CD8-positive, alpha-beta T cell (primary cell): ENCODE measurements at regions of chr5 and their contacts with region 1.

Region 1: GRCh38 chr5:162091336-162091735 is 23.8 kb downstream of the GABRG2 start:
- DNase-seq: no peak
- ATAC-seq: no peak
- H3K4me3 ChIP-seq: no peak overlapping the region
- H3K4me3 Mint-ChIP-seq: no peak overlapping the region
- H3K27ac ChIP-seq: no peak overlapping the region
- H3K27ac Mint-ChIP-seq: no peak overlapping the region
- H3K4me1 ChIP-seq: no peaks in the 10 kb centered on the region
- H3K4me1 Mint-ChIP-seq: no peaks in the 10 kb centered on the region
- H3K27me3 ChIP-seq: no peaks in the 10 kb centered on the region
- H3K27me3 Mint-ChIP-seq: no peaks in the 10 kb centered on the region
- CTCF ChIP-seq: no peak

Region 2: DNA sequence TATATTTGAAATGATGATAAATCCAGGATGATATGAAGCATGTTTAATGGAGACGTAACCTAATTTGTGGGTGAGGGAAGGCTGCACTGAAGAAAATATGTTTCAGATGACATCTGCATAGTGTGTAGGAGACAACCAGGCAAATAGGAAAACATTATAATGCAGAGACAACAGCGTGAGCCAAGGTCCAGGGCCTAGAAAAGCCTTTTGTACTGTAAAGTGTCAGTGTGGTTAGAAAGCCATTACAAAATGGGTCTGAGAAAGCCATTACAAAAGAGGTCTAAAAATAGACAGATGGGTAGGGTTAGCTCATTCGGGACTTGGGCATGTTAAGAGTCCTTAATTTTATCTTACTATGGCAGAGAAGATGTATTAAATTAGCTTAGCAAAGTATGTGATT is 38.7 kb before region 1 on chr5:
- CTCF ChIA-PET with region 1: no interaction called
- POLR2A ChIA-PET with region 1: no interaction called
- intact Hi-C with region 1: no loop called
- DNase-seq: no peak
- ATAC-seq: no peak
- H3K4me3 ChIP-seq: no peak overlapping the region
- H3K4me3 Mint-ChIP-seq: no peak overlapping the region
- H3K27ac ChIP-seq: no peak overlapping the region
- H3K27ac Mint-ChIP-seq: no peak overlapping the region
- H3K4me1 ChIP-seq: no peaks in the 10 kb centered on the region
- H3K4me1 Mint-ChIP-seq: no peaks in the 10 kb centered on the region
- H3K27me3 ChIP-seq: no peaks in the 10 kb centered on the region
- H3K27me3 Mint-ChIP-seq: no peaks in the 10 kb centered on the region
- CTCF ChIP-seq: no peak

Region 3: GRCh38 chr5:162154242-162154641 is 62.9 kb after region 1 on chr5:
- CTCF ChIA-PET with region 1: no interaction called
- POLR2A ChIA-PET with region 1: no interaction called
- intact Hi-C with region 1: no loop called
- DNase-seq: no peak
- ATAC-seq: no peak
- H3K4me3 ChIP-seq: no peak overlapping the region
- H3K4me3 Mint-ChIP-seq: no peak overlapping the region
- H3K27ac ChIP-seq: no peak overlapping the region
- H3K27ac Mint-ChIP-seq: no peak overlapping the region
- H3K4me1 ChIP-seq: no peaks in the 10 kb centered on the region
- H3K4me1 Mint-ChIP-seq: no peaks in the 10 kb centered on the region
- H3K27me3 ChIP-seq: no peaks in the 10 kb centered on the region
- H3K27me3 Mint-ChIP-seq: no peaks in the 10 kb centered on the region
- CTCF ChIP-seq: no peak

Region 4: GRCh38 chr5:162837155-162837554 is 745.8 kb after region 1 on chr5:
- CTCF ChIA-PET with region 1: no interaction called
- POLR2A ChIA-PET with region 1: no interaction called
- intact Hi-C with region 1: loop called in 1 of 2 experiments (anchors 10 kb)
- DNase-seq: no peak
- ATAC-seq: no peak
- H3K4me3 ChIP-seq: no peak overlapping the region
- H3K4me3 Mint-ChIP-seq: no peak overlapping the region
- H3K27ac ChIP-seq: no peak overlapping the region
- H3K27ac Mint-ChIP-seq: no peak overlapping the region
- H3K4me1 ChIP-seq: no peaks in the 10 kb centered on the region
- H3K4me1 Mint-ChIP-seq: no peaks in the 10 kb centered on the region
- H3K27me3 ChIP-seq: no peaks in the 10 kb centered on the region
- H3K27me3 Mint-ChIP-seq: no peaks in the 10 kb centered on the region
- CTCF ChIP-seq: no peak